Prostate gland (tissue), 2 donors: ENCODE measurements at regions of chr5 and their contacts with region 1.

Region 1: DNA sequence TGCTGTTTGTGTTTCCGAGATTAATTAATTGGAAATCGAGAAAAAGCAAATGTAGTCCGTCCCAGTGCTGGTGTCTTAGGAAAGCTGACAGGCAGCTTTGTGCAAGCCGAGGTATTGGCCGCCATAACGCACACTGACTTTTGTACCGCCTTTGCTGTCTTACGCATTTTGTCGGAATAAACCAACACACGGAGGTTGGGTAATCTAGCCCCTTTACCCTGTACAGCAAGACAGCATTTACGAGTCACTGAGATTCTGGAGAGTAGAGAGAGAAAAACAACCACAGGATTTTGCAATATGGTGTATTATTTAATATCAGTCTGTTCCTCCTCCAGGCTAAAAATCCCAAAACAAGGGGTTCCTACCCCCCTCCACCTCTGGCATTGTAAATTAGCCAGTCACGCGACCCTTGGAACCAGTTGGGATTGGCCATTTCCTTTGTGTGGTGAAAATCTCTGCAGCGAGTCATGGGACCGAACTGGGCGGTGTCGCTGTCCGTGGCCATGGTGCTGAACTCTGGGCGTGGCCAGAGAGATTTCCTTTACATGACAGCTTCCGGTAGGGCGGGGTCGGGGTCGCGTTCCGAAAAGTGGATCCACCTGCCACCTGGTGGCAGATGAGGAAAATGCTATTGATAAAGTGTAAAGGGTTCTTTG is 10.3 kb upstream of the PCDHB1 start:
- DNase-seq: peak; percentile 79
- H3K4me3 ChIP-seq: peak overlapping the region; percentile 6 to 18
- H3K27ac ChIP-seq: peak overlapping the region in 1 of 2 donors; percentile 37
- H3K4me1 ChIP-seq: no peaks in the 10 kb centered on the region
- H3K27me3 ChIP-seq: no peaks in the 10 kb centered on the region
- CTCF ChIP-seq: peak in 3 of 4 experiments; percentile 66 to 87 (median 69)
- POLR2A ChIP-seq: no peak

Region 2: DNA sequence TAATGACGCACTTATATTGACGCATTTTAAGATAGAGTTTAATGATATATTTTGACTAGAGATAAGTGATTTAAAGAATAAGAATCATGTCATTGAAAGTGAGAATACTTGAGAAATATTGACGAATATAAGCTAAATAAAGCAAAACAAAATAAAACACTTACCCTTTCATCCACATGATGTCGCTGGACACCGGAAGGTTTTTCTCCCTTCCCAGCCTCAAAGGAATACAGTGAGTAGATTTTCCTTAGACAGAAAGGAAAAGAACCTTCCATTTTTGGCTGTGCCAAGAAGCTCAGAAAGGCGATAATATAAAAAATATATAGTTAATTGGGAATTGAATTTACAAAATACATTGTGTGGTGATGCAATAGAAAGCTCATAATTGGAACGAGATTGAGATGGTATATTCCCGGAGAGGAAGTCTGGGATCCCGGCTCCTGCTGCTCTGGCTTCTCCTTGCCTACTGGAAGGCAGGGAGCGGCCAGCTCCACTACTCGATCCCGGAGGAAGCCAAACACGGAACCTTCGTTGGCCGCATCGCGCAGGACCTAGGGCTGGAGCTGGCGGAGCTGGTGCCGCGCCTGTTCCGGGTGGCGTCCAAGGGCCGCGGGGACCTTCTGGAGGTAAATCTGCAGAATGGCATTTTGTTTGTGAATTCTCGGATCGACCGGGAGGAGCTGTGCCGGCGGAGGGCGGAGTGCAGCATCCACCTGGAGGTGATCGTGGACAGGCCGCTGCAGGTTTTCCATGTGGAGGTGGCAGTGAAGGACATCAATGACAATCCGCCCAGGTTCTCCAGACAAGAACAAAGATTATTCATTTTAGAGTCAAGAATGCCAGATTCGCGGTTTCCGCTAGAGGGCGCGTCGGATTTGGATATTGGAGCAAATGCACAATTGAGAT is 219.3 kb before region 1 on chr5 and contains the start of gene PCDHA5:
- intact Hi-C with region 1: no loop called
- DNase-seq: no peak
- H3K4me3 ChIP-seq: no peak within 1 kb of the TSS
- H3K27ac ChIP-seq: no peak within 1 kb of the TSS
- H3K4me1 ChIP-seq: no peaks in the 10 kb centered on the region
- H3K27me3 ChIP-seq: peaks cover 2% of the 10 kb centered on the region
- CTCF ChIP-seq: no peak
- POLR2A ChIP-seq: no peak
- total RNA-seq, gene PCDHA5: 0.14 TPM in 1 of 2 donors, not detected in the other

Region 3: DNA sequence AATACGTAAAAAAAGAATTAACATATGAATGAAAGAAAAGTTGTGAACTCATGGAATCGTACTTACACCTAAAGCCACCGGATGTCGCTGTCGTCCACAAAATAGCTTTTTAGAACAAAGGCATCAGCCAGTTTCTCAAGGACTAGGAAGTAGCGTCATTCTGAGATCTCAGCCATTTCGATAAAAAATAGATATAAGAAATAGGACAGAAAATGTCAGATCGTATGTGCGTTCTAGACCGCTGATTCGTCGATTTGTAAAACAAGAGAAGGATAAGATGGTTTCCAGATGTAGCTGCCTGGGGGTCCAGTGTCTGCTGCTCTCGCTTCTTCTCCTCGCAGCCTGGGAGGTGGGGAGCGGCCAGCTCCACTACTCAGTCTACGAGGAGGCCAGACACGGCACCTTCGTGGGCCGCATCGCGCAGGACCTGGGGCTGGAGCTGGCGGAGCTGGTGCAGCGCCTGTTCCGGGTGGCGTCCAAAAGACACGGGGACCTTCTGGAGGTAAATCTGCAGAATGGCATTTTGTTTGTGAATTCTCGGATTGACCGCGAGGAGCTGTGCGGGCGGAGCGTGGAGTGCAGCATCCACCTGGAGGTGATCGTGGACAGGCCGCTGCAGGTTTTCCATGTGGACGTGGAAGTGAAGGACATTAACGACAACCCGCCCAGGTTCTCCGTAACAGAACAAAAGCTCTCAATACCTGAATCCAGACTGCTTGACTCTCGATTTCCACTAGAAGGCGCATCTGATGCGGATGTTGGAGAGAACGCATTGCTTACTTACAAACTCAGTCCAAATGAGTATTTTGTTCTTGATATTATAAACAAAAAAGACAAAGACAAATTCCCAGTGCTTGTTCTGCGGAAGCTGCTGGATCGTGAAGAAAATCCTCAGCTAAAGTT is 184.9 kb before region 1 on chr5 and contains the start of gene PCDHA10:
- intact Hi-C with region 1: loop called (anchors 10 kb)
- DNase-seq: no peak
- H3K4me3 ChIP-seq: no peak within 1 kb of the TSS
- H3K27ac ChIP-seq: no peak within 1 kb of the TSS
- H3K4me1 ChIP-seq: no peaks in the 10 kb centered on the region
- H3K27me3 ChIP-seq: no peaks in the 10 kb centered on the region
- CTCF ChIP-seq: peak in 1 of 4 experiments; percentile 29
- POLR2A ChIP-seq: no peak
- total RNA-seq, gene PCDHA10: 1.0 to 2.2 TPM

Region 4: GRCh38 chr5:140926443-140927227 is 114.3 kb before region 1 on chr5:
- intact Hi-C with region 1: loop called (anchors 10 kb)
- DNase-seq: peak; percentile 35
- H3K4me3 ChIP-seq: peak overlapping the region; percentile 24
- H3K27ac ChIP-seq: no peak overlapping the region
- H3K4me1 ChIP-seq: no peaks in the 10 kb centered on the region
- H3K27me3 ChIP-seq: no peaks in the 10 kb centered on the region
- CTCF ChIP-seq: peak; percentile 26 to 58 (median 48)
- POLR2A ChIP-seq: no peak

Region 5: GRCh38 chr5:140953234-140953633 is 87.7 kb before region 1 on chr5:
- intact Hi-C with region 1: no loop called
- DNase-seq: no peak
- H3K4me3 ChIP-seq: no peak overlapping the region
- H3K27ac ChIP-seq: no peak overlapping the region
- H3K4me1 ChIP-seq: no peaks in the 10 kb centered on the region
- H3K27me3 ChIP-seq: no peaks in the 10 kb centered on the region
- CTCF ChIP-seq: no peak
- POLR2A ChIP-seq: no peak